Activated B cell treated with CpG ODN at 0.5 μM for 24 hours (primary cell): ENCODE measurements at regions of chr17 and their contacts with region 1.

Region 1: GRCh38 chr17:8409966-8410864 is 12.6 kb upstream of the RNF222 start:
- DNase-seq: peak; percentile 66
- ATAC-seq: peak; percentile 81
- H3K4me3 Mint-ChIP-seq: no peak overlapping the region
- H3K27ac Mint-ChIP-seq: no peak overlapping the region
- H3K4me1 Mint-ChIP-seq: peaks cover 4% of the 10 kb centered on the region
- H3K27me3 Mint-ChIP-seq: peaks cover 13% of the 10 kb centered on the region
- CTCF ChIP-seq: peak; percentile 87

Region 2: DNA sequence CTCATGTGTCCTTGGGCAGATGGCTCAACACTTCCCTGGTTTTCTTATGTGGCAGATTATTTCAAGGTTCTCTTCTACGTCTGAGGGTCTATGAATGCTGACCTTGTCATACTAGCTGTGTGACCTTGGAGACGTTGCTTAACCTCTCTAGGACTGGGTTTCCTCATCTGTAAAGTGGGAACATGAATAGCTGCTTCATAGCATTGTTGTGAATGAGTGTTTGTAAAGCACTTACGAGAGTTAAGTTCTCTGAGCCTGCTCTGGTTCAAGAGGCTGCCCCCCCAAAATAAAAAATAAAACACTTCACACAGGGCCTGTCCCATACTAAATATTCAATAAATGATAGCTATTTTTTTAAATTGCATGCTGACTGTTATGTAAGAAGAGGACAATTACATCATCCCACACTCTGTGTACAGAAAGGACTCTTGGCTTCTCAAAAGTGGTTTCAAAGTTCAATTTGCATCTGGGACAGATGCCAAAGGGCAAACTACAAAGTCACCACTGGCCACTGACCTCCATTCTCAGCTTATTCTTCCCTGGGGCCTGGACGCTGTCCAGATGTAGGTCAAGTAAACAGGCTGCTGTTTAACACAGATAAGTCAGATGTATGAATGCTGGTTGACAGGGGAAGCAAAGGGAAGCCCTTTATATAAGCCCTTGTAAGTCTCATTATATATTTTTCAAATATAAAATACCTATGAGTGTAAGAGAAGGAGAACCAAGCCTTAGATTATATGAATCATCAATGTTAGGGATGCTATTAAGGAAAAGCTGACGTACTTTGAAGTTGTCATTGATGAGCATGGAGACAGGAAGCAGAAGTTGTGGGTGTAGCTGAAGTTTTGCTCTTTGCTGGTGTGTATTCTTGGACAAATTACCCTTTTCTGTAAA is 10.1 kb after region 1 on chr17:
- CTCF ChIA-PET with region 1: interaction called, 10 read pairs
- POLR2A ChIA-PET with region 1: no interaction called
- intact Hi-C with region 1: no loop called
- DNase-seq: no peak
- ATAC-seq: no peak
- H3K4me3 Mint-ChIP-seq: no peak overlapping the region
- H3K27ac Mint-ChIP-seq: no peak overlapping the region
- H3K4me1 Mint-ChIP-seq: no peaks in the 10 kb centered on the region
- H3K27me3 Mint-ChIP-seq: peaks cover 41% of the 10 kb centered on the region
- CTCF ChIP-seq: no peak

Region 3: DNA sequence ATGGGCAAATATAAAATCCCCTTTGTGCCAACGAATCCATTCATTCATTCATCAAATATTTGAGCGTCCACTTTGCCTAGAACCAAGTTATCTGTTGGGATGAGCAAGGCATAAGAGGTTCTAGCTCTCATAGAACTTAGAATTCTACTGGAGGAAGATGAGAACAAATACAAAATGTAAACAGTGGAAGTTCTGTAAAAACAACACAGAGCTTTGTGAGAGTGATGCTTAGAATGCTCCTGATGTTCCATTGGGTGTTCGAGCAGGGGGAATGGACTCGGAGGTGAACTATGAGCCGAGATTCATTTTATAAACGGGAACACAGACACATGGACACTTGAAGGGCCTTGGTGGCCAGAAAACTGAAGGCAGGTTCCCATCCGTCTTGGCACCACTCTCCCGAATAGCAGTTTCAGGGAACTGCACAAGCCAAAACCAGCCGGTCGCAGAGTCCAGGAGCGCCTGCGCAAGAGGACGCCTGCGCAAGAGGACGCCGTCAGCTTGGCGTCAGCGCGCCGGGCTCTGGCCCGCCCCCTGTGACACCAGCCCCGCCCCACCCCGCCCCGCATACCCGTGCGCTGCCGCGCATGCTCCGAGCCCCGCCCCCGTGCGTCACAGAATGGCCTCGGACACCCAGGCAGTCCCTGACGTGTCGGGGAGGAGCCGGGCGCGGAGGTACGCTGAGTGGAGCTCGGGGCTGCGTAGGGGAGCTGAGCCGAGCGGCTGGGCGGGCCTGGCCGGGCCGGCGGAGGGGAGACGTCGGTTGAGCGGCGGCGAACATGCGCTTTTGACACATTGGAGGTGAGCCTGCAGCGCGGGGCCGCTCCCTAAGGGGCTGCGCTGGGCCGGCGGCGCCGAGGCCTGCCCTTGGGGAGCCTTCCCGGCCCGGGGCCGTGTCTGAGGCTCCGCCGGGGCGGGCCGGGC is 25.3 kb after region 1 on chr17 and contains the start of gene NDEL1:
- CTCF ChIA-PET with region 1: interaction called, 3 read pairs
- POLR2A ChIA-PET with region 1: no interaction called
- intact Hi-C with region 1: loop called (anchors 1 kb)
- DNase-seq: peak; percentile 97
- ATAC-seq: peak; percentile 94
- H3K4me3 Mint-ChIP-seq: peak within 1 kb of the TSS; percentile 91
- H3K27ac Mint-ChIP-seq: peak within 1 kb of the TSS; percentile 93
- H3K4me1 Mint-ChIP-seq: peaks cover 32% of the 10 kb centered on the region
- H3K27me3 Mint-ChIP-seq: no peaks in the 10 kb centered on the region
- CTCF ChIP-seq: no peak
- total RNA-seq, gene NDEL1: 64.6 and 82.6 TPM in 2 replicates

Region 4: GRCh38 chr17:8599351-8600011 is 189.3 kb after region 1 on chr17:
- CTCF ChIA-PET with region 1: no interaction called
- POLR2A ChIA-PET with region 1: no interaction called
- intact Hi-C with region 1: no loop called
- DNase-seq: no peak
- ATAC-seq: no peak
- H3K4me3 Mint-ChIP-seq: no peak overlapping the region
- H3K27ac Mint-ChIP-seq: no peak overlapping the region
- H3K4me1 Mint-ChIP-seq: no peaks in the 10 kb centered on the region
- H3K27me3 Mint-ChIP-seq: peaks cover 3% of the 10 kb centered on the region
- CTCF ChIP-seq: no peak

Region 5: DNA sequence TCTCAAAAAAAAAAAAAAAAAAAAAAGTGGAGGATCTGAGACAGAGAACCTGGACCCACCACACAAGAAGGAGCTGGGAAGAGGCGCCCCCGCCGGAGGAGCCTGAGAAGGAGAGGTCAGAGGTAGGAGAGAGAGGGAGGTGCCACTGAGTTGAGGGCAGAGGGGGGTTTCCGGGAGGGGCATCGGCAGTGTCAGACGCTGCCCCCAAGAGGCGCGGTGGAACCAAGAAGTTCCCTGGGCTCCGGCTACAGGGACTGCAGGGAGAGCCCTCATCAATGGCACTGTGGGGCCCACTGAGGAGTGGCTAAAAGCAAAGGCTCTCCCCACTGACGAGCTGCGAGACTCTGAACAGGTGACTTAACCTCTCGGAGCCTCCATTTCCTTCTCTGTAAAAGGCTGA is 330.3 kb after region 1 on chr17:
- CTCF ChIA-PET with region 1: interaction called, 56 read pairs
- POLR2A ChIA-PET with region 1: interaction called, 4 read pairs
- intact Hi-C with region 1: no loop called
- DNase-seq: peak; percentile 42
- ATAC-seq: peak; percentile 79
- H3K4me3 Mint-ChIP-seq: peak overlapping the region; percentile 83
- H3K27ac Mint-ChIP-seq: peak overlapping the region; percentile 53
- H3K4me1 Mint-ChIP-seq: peaks cover 16% of the 10 kb centered on the region
- H3K27me3 Mint-ChIP-seq: no peaks in the 10 kb centered on the region
- CTCF ChIP-seq: no peak

Region 6: DNA sequence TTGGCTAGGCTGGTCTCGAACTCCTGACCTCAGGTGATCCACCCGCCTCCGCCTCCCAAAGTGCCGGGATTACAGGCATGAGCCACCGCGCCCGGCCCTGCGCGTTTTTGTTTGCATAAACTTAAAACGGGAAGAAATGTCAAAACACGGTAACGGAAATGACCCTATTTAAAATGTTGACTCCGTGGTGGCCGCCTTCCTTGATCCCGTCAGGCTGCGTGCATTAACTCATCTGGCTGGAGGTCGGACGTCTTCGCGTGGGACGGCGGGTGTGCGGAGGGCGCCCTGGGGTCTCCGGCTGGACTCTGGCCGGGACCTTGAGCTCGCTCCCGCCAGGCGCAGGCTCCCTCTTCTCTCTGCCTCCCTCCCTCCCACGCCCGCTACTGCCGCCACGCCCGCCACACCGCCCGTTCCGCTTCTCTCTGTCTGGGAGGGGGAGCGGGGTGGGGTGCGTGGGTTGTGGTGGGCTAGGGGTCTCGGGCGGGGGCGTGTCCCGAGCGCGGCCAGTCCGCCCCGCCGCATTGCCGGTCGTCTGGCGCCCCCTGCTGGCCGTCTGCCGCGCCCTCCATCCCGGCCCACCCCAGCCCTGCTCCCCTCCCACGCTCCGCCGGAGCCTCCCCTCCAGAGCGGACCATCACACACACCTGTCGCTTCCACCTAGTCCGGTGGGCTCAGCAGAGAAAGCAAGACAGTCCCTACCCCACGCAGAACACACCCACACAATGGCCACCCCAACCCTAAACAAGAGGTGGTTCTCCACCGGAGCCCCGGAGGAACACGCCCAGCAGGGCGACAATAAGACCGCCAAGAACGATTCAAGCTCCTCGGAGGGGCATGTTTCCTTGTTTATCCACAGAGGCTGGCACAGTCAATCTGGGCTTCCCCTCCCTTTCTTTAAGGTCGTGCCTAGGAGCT is 335.6 kb after region 1 on chr17:
- CTCF ChIA-PET with region 1: interaction called, 56 read pairs
- POLR2A ChIA-PET with region 1: interaction called, 4 read pairs
- intact Hi-C with region 1: loop called (anchors 1 kb)
- DNase-seq: peak; percentile 84
- ATAC-seq: peak; percentile 81
- H3K4me3 Mint-ChIP-seq: peak overlapping the region; percentile 85
- H3K27ac Mint-ChIP-seq: peak overlapping the region; percentile 77
- H3K4me1 Mint-ChIP-seq: peaks cover 10% of the 10 kb centered on the region
- H3K27me3 Mint-ChIP-seq: no peaks in the 10 kb centered on the region
- CTCF ChIP-seq: peak; percentile 96

Region 7: DNA sequence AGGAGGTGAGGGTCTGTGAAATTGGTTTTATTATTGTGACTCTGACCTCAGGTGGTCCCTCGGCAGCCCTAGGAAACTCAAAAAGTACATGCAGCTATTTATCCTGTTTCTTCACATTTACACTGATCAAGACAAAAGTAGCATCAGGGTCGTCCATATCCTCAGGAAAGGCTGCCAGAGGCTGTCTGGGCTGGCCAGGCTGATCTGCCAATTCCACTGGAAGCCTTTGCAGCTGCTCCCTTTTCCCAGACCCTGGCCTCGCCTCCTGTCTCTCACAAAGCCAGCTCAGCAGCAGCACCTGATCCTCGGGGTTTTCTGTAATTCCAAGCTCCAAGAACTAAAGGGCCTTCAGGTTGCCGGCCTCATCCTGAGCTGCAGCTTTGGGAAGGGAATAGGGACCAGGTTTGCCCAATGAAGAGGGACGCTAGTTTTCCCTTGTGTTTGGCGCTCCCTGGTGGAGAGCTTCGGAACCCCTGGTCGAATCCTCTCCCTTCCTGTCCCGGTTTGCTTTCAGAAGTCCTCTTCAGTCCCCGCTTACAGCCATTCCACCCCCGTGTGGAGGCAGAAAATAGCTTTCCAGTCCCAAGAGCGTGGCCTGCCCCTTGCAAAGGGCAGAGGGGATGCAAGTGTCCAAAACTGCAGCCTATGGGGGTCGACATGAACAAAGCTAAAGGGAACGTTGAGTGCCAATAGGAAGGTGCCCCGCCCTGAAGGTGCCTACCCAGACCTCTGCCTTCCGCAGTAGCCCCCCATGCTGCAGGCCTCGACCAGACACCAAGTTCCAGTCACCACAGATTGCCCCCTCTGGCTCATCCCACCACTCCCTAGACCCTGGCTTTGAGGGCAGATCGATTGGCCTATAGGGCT is 375.6 kb after region 1 on chr17:
- CTCF ChIA-PET with region 1: interaction called, 24 read pairs
- POLR2A ChIA-PET with region 1: interaction called, 3 read pairs
- intact Hi-C with region 1: loop called (anchors 1 kb)
- DNase-seq: peak; percentile 59
- ATAC-seq: peak; percentile 56
- H3K4me3 Mint-ChIP-seq: no peak overlapping the region
- H3K27ac Mint-ChIP-seq: no peak overlapping the region
- H3K4me1 Mint-ChIP-seq: peaks cover 2% of the 10 kb centered on the region
- H3K27me3 Mint-ChIP-seq: peaks cover 9% of the 10 kb centered on the region
- CTCF ChIP-seq: peak; percentile 36

Region 8: DNA sequence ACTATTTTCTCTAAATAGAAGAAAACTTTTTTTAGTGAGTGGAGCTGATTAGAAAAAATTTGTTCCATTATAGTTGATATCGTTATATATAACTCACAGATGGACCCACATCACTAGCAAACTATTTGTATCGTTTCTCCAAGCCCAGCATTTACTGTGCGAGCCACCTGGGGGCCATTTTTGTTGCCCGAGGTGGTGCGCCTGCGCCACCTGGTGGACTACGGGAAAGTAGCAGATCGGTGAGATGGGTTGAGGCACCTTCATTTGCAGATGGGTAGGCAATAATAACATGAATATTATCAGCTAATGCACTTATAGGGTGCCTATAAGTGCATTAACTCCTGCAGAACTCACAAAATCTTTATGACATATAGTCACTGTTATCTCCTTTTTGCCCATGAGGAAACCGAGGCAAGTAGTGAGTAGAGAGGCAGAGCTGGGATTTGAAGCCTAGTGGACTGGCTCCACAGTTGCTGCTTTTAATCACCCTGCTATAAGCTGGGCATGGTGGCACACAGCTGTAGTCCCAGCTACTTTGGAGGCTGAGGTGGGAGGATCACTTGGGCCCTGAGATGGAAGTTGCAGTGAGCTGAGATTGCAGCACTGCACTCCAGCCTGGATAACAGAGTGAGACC is 587.9 kb after region 1 on chr17:
- CTCF ChIA-PET with region 1: interaction called, 5 read pairs
- POLR2A ChIA-PET with region 1: no interaction called
- intact Hi-C with region 1: loop called (anchors 1 kb)
- DNase-seq: peak; percentile 72
- ATAC-seq: peak; percentile 74
- H3K4me3 Mint-ChIP-seq: no peak overlapping the region
- H3K27ac Mint-ChIP-seq: no peak overlapping the region
- H3K4me1 Mint-ChIP-seq: peaks cover 22% of the 10 kb centered on the region
- H3K27me3 Mint-ChIP-seq: peaks cover 10% of the 10 kb centered on the region
- CTCF ChIP-seq: peak; percentile 73